SK-N-SH (cell line): ENCODE measurements at regions of chr17 and their contacts with region 1.

Region 1: GRCh38 chr17:41648411-41649195 is 24.2 kb upstream of the KRT17 start:
- DNase-seq: peak; percentile 94
- H3K4me3 ChIP-seq: peak overlapping the region; percentile 36 to 49
- H3K27ac ChIP-seq: no peak overlapping the region
- H3K4me1 ChIP-seq: peaks cover 0 to 15% of the 10 kb centered on the region in 2 experiments; a peak in 1 of 4 replicates
- H3K27me3 ChIP-seq: no peaks in the 10 kb centered on the region
- CTCF ChIP-seq: peak; percentile 92
- EP300 ChIP-seq: no peak
- RAD21 ChIP-seq: peak; percentile 70

Region 2: GRCh38 chr17:40909351-40909750 is 739.3 kb before region 1 on chr17:
- CTCF ChIA-PET with region 1: interaction called, 20 read pairs
- POLR2A ChIA-PET with region 1: interaction called, 3 read pairs
- DNase-seq: peak; percentile 75
- H3K4me3 ChIP-seq: no peak overlapping the region; a peak in 1 of 4 replicates
- H3K27ac ChIP-seq: peak overlapping the region in 1 of 2 experiments; percentile 66; a peak in 2 of 4 replicates
- H3K4me1 ChIP-seq: peaks cover 0 to 14% of the 10 kb centered on the region in 2 experiments; a peak in 3 of 4 replicates
- H3K27me3 ChIP-seq: peaks cover 20% of the 10 kb centered on the region; the same call in 1 of the 2 replicates
- CTCF ChIP-seq: peak; percentile 84
- EP300 ChIP-seq: peak in 1 of 2 experiments; percentile 27; a peak in 1 of 4 replicates
- RAD21 ChIP-seq: peak; percentile 92

Region 3: GRCh38 chr17:41521574-41522261 is 126.9 kb before region 1 on chr17:
- CTCF ChIA-PET with region 1: interaction called, 20 read pairs
- POLR2A ChIA-PET with region 1: interaction called, 3 read pairs
- DNase-seq: no peak
- H3K4me3 ChIP-seq: no peak overlapping the region
- H3K27ac ChIP-seq: peak overlapping the region; percentile 59 to 75; a peak in 3 of 4 replicates
- H3K4me1 ChIP-seq: peaks cover 41 to 61% of the 10 kb centered on the region in 2 experiments
- H3K27me3 ChIP-seq: no peaks in the 10 kb centered on the region
- CTCF ChIP-seq: no peak
- EP300 ChIP-seq: peak in 1 of 2 experiments; percentile 46; a peak in 1 of 4 replicates
- RAD21 ChIP-seq: no peak

Region 4: DNA sequence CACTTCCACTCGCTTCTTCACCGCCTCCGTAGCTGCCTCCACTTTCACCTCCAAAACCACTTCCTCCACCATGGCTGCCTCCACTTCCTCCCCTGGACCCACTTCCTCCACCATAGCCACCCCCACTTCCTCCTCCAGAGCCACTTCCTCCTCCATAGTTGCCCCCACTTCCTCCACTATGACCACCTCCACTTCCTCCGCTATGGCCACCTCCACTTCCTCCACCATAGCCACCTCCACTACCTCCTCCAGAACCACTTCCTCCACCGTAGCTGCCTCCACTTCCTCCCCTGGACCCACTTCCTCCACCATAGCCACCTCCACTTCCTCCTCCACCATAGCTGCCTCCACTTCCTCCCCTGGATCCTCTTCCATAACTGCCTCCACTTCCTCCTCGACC is 81.3 kb before region 1 on chr17:
- CTCF ChIA-PET with region 1: interaction called, 646 read pairs
- POLR2A ChIA-PET with region 1: no interaction called
- DNase-seq: no peak
- H3K4me3 ChIP-seq: no peak overlapping the region
- H3K27ac ChIP-seq: no peak overlapping the region
- H3K4me1 ChIP-seq: no peaks in the 10 kb centered on the region
- H3K27me3 ChIP-seq: peaks cover 35% of the 10 kb centered on the region; the same call in 1 of the 2 replicates
- CTCF ChIP-seq: no peak
- EP300 ChIP-seq: no peak
- RAD21 ChIP-seq: no peak

Region 5: DNA sequence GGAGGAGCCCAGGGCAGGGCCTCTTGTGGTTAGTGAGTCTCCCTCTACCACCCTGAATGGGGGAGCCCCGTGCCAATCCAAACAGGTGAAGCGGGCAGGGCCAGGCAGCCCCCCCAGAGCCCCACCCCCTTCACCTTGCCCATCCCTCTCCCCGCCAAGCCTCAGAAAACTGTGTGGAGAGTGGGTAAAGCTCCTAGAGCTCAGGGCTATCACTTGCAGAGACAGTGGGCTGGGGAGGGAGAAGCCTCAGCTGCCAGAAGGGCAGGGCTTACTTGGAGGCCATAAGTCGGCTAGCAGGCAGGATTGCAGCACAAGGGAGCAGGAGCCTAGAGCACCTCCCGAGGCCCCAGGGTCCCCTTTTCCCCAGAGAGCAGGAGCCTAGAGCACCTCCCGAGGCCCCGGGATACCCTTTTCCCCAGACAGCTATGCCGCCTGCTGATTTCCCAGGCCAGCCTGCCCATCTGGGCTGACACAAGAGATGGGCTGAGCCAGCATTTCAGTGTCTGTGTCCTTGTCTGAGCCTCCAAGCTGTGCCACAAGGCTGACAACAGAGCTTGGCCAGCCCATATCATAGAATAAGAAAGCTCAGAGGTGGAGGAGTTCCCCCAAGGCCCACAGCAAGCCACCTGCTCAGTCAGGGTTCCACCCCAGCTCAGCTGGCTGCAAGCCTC is 55.2 kb before region 1 on chr17:
- CTCF ChIA-PET with region 1: interaction called, 50 read pairs
- POLR2A ChIA-PET with region 1: no interaction called
- DNase-seq: no peak
- H3K4me3 ChIP-seq: no peak overlapping the region
- H3K27ac ChIP-seq: no peak overlapping the region
- H3K4me1 ChIP-seq: peaks cover 0 to 4% of the 10 kb centered on the region in 2 experiments; a peak in 1 of 4 replicates
- H3K27me3 ChIP-seq: peaks cover 40% of the 10 kb centered on the region
- CTCF ChIP-seq: no peak
- EP300 ChIP-seq: no peak
- RAD21 ChIP-seq: no peak

Region 6: GRCh38 chr17:41624208-41625101 is 24.1 kb before region 1 on chr17 and contains the start of gene KRT17:
- CTCF ChIA-PET with region 1: interaction called, 27 read pairs
- POLR2A ChIA-PET with region 1: interaction called, 3 read pairs
- DNase-seq: no peak
- H3K4me3 ChIP-seq: no peak within 1 kb of the TSS
- H3K27ac ChIP-seq: no peak within 1 kb of the TSS
- H3K4me1 ChIP-seq: peaks cover 0 to 13% of the 10 kb centered on the region in 2 experiments; a peak in 1 of 4 replicates
- H3K27me3 ChIP-seq: no peaks in the 10 kb centered on the region
- CTCF ChIP-seq: no peak
- EP300 ChIP-seq: no peak
- RAD21 ChIP-seq: no peak
- polyA plus RNA-seq, gene KRT17: 0.19 and 0.39 TPM in 2 replicates

Region 7: GRCh38 chr17:41665566-41666236 is 17.1 kb after region 1 on chr17:
- CTCF ChIA-PET with region 1: interaction called, 516 read pairs
- POLR2A ChIA-PET with region 1: no interaction called
- DNase-seq: peak; percentile 96
- H3K4me3 ChIP-seq: peak overlapping the region; percentile 44 to 58
- H3K27ac ChIP-seq: peak overlapping the region; percentile 49 to 77
- H3K4me1 ChIP-seq: peaks cover 4 to 14% of the 10 kb centered on the region in 2 experiments; a peak in 2 of 4 replicates
- H3K27me3 ChIP-seq: no peaks in the 10 kb centered on the region; the same call in 1 of the 2 replicates
- CTCF ChIP-seq: peak; percentile 89
- EP300 ChIP-seq: no peak
- RAD21 ChIP-seq: peak; percentile 29; the same call in 1 of the 2 replicates

Region 8: GRCh38 chr17:41801374-41802271 is 153.0 kb after region 1 on chr17:
- CTCF ChIA-PET with region 1: no interaction called
- POLR2A ChIA-PET with region 1: no interaction called
- DNase-seq: peak; percentile 89
- H3K4me3 ChIP-seq: peak overlapping the region in 1 of 2 experiments; percentile 43; a peak in 1 of 4 replicates
- H3K27ac ChIP-seq: no peak overlapping the region
- H3K4me1 ChIP-seq: peaks cover 0 to 6% of the 10 kb centered on the region in 2 experiments; a peak in 1 of 4 replicates
- H3K27me3 ChIP-seq: no peaks in the 10 kb centered on the region
- CTCF ChIP-seq: peak; percentile 96
- EP300 ChIP-seq: no peak
- RAD21 ChIP-seq: peak; percentile 90